Psoas muscle (tissue), 8 donors: ENCODE measurements at regions of chr12 and their contacts with region 1.

Region 1: GRCh38 chr12:7933255-7933729 is 2.7 kb downstream of the SLC2A3 start:
- DNase-seq: peak; percentile 66 to 80
- ATAC-seq: peak; percentile 57 to 88 (median 86)
- H3K4me3 ChIP-seq: peak overlapping the region; percentile 66
- H3K27ac ChIP-seq: peak overlapping the region; percentile 39
- H3K4me1 ChIP-seq: peaks cover 10% of the 10 kb centered on the region
- H3K27me3 ChIP-seq: no peaks in the 10 kb centered on the region
- CTCF ChIP-seq: peak; percentile 47

Region 2: DNA sequence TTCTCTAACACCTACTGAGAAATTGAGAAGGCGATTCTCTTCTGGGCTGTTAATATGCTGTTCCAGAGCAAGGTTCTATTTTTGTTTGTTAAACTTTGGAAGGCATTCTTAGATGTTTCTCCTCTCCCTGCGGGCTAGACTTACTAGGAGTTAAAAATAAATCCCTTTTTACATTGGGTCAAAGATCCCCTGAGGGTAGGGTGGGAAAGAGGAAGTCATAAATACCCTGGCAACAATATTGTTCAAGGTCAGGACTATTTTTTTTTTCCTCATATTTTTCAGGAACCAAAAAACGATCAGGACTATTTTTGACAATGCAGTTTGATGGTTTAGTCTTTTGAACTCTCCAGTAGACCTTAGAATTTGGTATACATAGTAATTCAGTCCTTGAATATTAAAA is 48.6 kb before region 1 on chr12:
- intact Hi-C with region 1: no loop called
- DNase-seq: no peak
- ATAC-seq: no peak
- H3K4me3 ChIP-seq: no peak overlapping the region
- H3K27ac ChIP-seq: no peak overlapping the region
- H3K4me1 ChIP-seq: no peaks in the 10 kb centered on the region
- H3K27me3 ChIP-seq: no peaks in the 10 kb centered on the region
- CTCF ChIP-seq: no peak

Region 3: GRCh38 chr12:7907009-7907408 is 26.3 kb before region 1 on chr12:
- intact Hi-C with region 1: no loop called
- DNase-seq: no peak
- ATAC-seq: no peak
- H3K4me3 ChIP-seq: no peak overlapping the region
- H3K27ac ChIP-seq: no peak overlapping the region
- H3K4me1 ChIP-seq: no peaks in the 10 kb centered on the region
- H3K27me3 ChIP-seq: no peaks in the 10 kb centered on the region
- CTCF ChIP-seq: no peak

Region 4: GRCh38 chr12:7970475-7971252 is 37.4 kb after region 1 on chr12:
- intact Hi-C with region 1: loop called in 1 of 2 experiments (anchors 5 kb)
- DNase-seq: peak; percentile 90
- ATAC-seq: peak; percentile 85 to 95 (median 90)
- H3K4me3 ChIP-seq: peak overlapping the region; percentile 68
- H3K27ac ChIP-seq: peak overlapping the region; percentile 80
- H3K4me1 ChIP-seq: peaks cover 6% of the 10 kb centered on the region
- H3K27me3 ChIP-seq: peaks cover 0 to 40% (median 9%) of the 10 kb centered on the region in 3 donors
- CTCF ChIP-seq: no peak